Activated CD4-positive, alpha-beta memory T cell treated with anti-CD3 and anti-CD28 coated beads, Interleukin-2, amount 10 ng/mL, durations not matched to agents 7 days and 5 days (primary cell): ENCODE measurements at regions of chr14 and their contacts with region 1.

Region 1: GRCh38 chr14:20477211-20477876 is 8.1 kb downstream of the PNP start:
- DNase-seq: peak; percentile 58
- H3K4me3 Mint-ChIP-seq: peak overlapping the region; percentile 38
- H3K27ac Mint-ChIP-seq: peak overlapping the region; percentile 96
- H3K4me1 Mint-ChIP-seq: peaks cover 68% of the 10 kb centered on the region
- H3K27me3 Mint-ChIP-seq: no peaks in the 10 kb centered on the region

Region 2: GRCh38 chr14:20434701-20435581 is 42.4 kb before region 1 on chr14:
- CTCF ChIA-PET with region 1: no interaction called
- POLR2A ChIA-PET with region 1: no interaction called
- DNase-seq: no peak
- H3K4me3 Mint-ChIP-seq: no peak overlapping the region
- H3K27ac Mint-ChIP-seq: no peak overlapping the region
- H3K4me1 Mint-ChIP-seq: no peaks in the 10 kb centered on the region
- H3K27me3 Mint-ChIP-seq: peaks cover 3% of the 10 kb centered on the region

Region 3: DNA sequence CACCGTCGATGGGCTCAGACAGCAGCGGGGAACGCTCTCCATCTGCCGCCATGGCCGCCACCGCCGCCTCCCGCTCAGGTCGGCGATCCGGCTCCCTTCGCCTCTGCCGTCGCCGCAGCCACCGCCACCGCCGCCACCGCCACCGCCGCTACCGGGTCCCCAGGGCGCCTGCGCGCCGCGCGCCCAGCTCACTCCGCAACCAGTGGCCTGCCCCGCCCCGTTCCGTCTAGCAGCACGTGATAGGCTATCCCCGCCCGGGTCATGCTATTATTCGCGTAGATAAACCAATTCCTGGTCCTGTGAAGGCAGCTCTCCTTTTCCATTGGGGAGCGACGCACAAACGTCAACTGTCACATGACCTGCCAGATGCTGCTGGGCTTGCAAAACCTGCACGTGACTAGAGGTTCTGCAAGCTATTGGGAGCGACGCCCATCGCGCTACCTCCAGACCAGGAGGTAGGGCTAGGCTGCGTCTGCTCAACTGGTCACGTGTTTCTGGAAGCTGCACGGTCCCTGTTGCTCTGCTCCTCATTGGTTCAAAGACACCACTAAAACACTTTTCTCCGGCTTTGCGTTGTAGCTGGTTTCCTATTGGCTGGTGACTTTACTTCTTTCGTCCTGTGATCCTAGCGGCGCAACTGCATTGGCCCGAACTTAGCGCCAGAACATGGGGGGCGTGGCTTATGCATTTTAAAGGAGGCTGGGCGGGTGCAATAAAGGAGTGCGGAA is 15.9 kb before region 1 on chr14 and contains the start of gene PIP4P1:
- CTCF ChIA-PET with region 1: interaction called, 3 read pairs
- POLR2A ChIA-PET with region 1: interaction called, 95 read pairs
- DNase-seq: peak; percentile 98
- H3K4me3 Mint-ChIP-seq: peak within 1 kb of the TSS; percentile 97
- H3K27ac Mint-ChIP-seq: peak within 1 kb of the TSS; percentile 90
- H3K4me1 Mint-ChIP-seq: peaks cover 39% of the 10 kb centered on the region
- H3K27me3 Mint-ChIP-seq: no peaks in the 10 kb centered on the region
- total RNA-seq, gene PIP4P1: 39.5 to 42.9 TPM